CD8-positive, alpha-beta T cell (primary cell): ENCODE measurements at regions of chr1 and their contacts with region 1.

Region 1: GRCh38 chr1:12619792-12620487 is 1.9 kb upstream of the DHRS3 start:
- DNase-seq: peak; percentile 60 to 86 (median 79)
- ATAC-seq: peak; percentile 45
- H3K4me3 ChIP-seq: peak overlapping the region; percentile 90
- H3K4me3 Mint-ChIP-seq: peak overlapping the region; percentile 99
- H3K27ac ChIP-seq: no peak overlapping the region
- H3K27ac Mint-ChIP-seq: peak overlapping the region; percentile 69
- H3K4me1 ChIP-seq: peaks cover 33% of the 10 kb centered on the region
- H3K4me1 Mint-ChIP-seq: peaks cover 37% of the 10 kb centered on the region
- H3K27me3 ChIP-seq: no peaks in the 10 kb centered on the region
- H3K27me3 Mint-ChIP-seq: no peaks in the 10 kb centered on the region
- CTCF ChIP-seq: peak; percentile 97

Region 2: DNA sequence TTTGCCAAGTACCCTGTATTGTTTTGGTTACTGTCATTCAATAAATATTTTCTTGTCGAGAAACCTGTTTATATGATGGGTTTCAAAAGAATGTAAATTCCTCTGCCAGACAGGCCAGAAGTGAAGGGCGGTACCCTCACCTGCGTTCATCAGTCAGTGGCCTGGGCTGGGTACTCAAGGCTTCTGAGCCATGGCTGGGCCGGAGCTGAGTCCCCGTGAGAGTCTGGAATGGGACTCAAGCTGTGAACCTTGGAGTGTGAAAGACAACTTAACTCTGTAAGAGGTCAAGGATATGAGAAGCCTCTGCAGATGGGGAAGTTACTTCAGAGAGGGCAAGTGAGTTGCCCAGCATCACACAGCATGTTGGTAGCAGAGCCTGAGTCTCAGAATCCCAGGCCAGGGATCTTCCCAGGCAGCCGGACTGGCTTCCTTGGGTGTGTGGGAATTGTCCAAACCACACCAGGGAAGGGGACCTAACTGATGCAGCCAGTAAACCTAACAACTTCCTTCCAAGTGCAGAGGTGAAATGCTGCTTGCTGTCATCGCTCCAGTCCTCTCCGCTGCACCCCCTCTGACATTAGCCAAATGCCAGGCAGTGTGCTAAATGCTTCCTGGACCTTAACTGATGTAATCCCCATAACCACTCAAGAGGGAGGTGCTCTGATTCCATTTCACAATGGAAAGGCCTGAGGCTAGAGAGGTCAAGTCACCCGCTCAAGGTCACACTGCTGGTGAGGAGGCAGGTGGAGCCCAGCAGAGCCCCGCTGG is 1136.2 kb before region 1 on chr1:
- CTCF ChIA-PET with region 1: no interaction called
- POLR2A ChIA-PET with region 1: no interaction called
- intact Hi-C with region 1: no loop called
- DNase-seq: no peak
- ATAC-seq: no peak
- H3K4me3 ChIP-seq: no peak overlapping the region
- H3K4me3 Mint-ChIP-seq: no peak overlapping the region
- H3K27ac ChIP-seq: no peak overlapping the region
- H3K27ac Mint-ChIP-seq: no peak overlapping the region
- H3K4me1 ChIP-seq: peaks cover 11% of the 10 kb centered on the region
- H3K4me1 Mint-ChIP-seq: peaks cover 11% of the 10 kb centered on the region
- H3K27me3 ChIP-seq: peaks cover 0 to 18% of the 10 kb centered on the region in 2 experiments
- H3K27me3 Mint-ChIP-seq: peaks cover 49% of the 10 kb centered on the region
- CTCF ChIP-seq: no peak

Region 3: GRCh38 chr1:12275369-12275768 is 344.6 kb before region 1 on chr1:
- CTCF ChIA-PET with region 1: interaction called, 19 read pairs
- POLR2A ChIA-PET with region 1: no interaction called
- intact Hi-C with region 1: loop called (anchors 2 to 10 kb)
- DNase-seq: peak in 8 of 9 experiments; percentile 5 to 52 (median 34)
- ATAC-seq: no peak
- H3K4me3 ChIP-seq: no peak overlapping the region
- H3K4me3 Mint-ChIP-seq: no peak overlapping the region
- H3K27ac ChIP-seq: no peak overlapping the region
- H3K27ac Mint-ChIP-seq: no peak overlapping the region
- H3K4me1 ChIP-seq: no peaks in the 10 kb centered on the region
- H3K4me1 Mint-ChIP-seq: peaks cover 6% of the 10 kb centered on the region
- H3K27me3 ChIP-seq: no peaks in the 10 kb centered on the region
- H3K27me3 Mint-ChIP-seq: no peaks in the 10 kb centered on the region
- CTCF ChIP-seq: peak; percentile 37

Region 4: DNA sequence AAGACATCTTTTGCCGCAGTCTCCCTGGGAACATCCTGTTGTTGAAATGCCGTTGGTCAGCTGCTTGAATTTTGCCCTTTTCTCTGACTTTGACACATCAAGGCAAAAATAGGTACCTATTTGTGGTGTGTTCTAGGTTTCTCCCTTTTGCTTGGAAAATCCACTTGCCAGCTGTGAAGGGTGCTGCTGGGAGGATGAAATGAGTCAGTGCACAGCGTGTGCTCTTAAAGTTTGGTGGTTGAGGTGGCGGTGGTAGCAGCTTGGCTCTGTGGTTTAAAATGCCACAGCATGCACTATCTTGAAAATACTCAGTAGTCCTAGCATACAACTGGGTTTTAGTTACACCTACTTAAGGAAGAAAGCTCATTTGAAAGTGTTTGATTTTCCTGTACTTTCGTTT is 185.8 kb before region 1 on chr1:
- CTCF ChIA-PET with region 1: interaction called, 10 read pairs
- POLR2A ChIA-PET with region 1: no interaction called
- intact Hi-C with region 1: loop called (anchors 1 to 5 kb)
- DNase-seq: peak in 8 of 9 experiments; percentile 37 to 86 (median 62)
- ATAC-seq: peak; percentile 69
- H3K4me3 ChIP-seq: peak overlapping the region in 1 of 2 experiments; percentile 32
- H3K4me3 Mint-ChIP-seq: peak overlapping the region; percentile 54
- H3K27ac ChIP-seq: peak overlapping the region in 1 of 2 experiments; percentile 74
- H3K27ac Mint-ChIP-seq: peak overlapping the region; percentile 87
- H3K4me1 ChIP-seq: peaks cover 59% of the 10 kb centered on the region
- H3K4me1 Mint-ChIP-seq: peaks cover 79% of the 10 kb centered on the region
- H3K27me3 ChIP-seq: no peaks in the 10 kb centered on the region
- H3K27me3 Mint-ChIP-seq: no peaks in the 10 kb centered on the region
- CTCF ChIP-seq: no peak

Region 5: GRCh38 chr1:12561121-12561520 is 58.8 kb before region 1 on chr1:
- CTCF ChIA-PET with region 1: no interaction called
- POLR2A ChIA-PET with region 1: no interaction called
- intact Hi-C with region 1: loop called in 1 of 2 experiments (anchors 5 kb)
- DNase-seq: no peak
- ATAC-seq: no peak
- H3K4me3 ChIP-seq: no peak overlapping the region
- H3K4me3 Mint-ChIP-seq: no peak overlapping the region
- H3K27ac ChIP-seq: no peak overlapping the region
- H3K27ac Mint-ChIP-seq: no peak overlapping the region
- H3K4me1 ChIP-seq: no peaks in the 10 kb centered on the region
- H3K4me1 Mint-ChIP-seq: peaks cover 2% of the 10 kb centered on the region
- H3K27me3 ChIP-seq: no peaks in the 10 kb centered on the region
- H3K27me3 Mint-ChIP-seq: no peaks in the 10 kb centered on the region
- CTCF ChIP-seq: no peak

Region 6: GRCh38 chr1:12630946-12631530 is 11.1 kb after region 1 on chr1:
- CTCF ChIA-PET with region 1: interaction called, 18 read pairs
- POLR2A ChIA-PET with region 1: no interaction called
- intact Hi-C with region 1: no loop called
- DNase-seq: no peak
- ATAC-seq: no peak
- H3K4me3 ChIP-seq: no peak overlapping the region
- H3K4me3 Mint-ChIP-seq: no peak overlapping the region
- H3K27ac ChIP-seq: no peak overlapping the region
- H3K27ac Mint-ChIP-seq: no peak overlapping the region
- H3K4me1 ChIP-seq: peaks cover 12% of the 10 kb centered on the region
- H3K4me1 Mint-ChIP-seq: peaks cover 17% of the 10 kb centered on the region
- H3K27me3 ChIP-seq: no peaks in the 10 kb centered on the region
- H3K27me3 Mint-ChIP-seq: peaks cover 10% of the 10 kb centered on the region
- CTCF ChIP-seq: no peak